B cell (primary cell): ENCODE measurements at regions of chr17 and their contacts with region 1.

Region 1: GRCh38 chr17:63600569-63601438 is at the start of gene TACO1:
- DNase-seq: peak; percentile 87
- ATAC-seq: peak; percentile 97
- H3K4me3 ChIP-seq: peak within 1 kb of the TSS; percentile 67 to 97 (median 91)
- H3K4me3 Mint-ChIP-seq: peak within 1 kb of the TSS; percentile 95
- H3K27ac ChIP-seq: peak within 1 kb of the TSS; percentile 39 to 88
- H3K27ac Mint-ChIP-seq: peak within 1 kb of the TSS; percentile 93
- H3K4me1 ChIP-seq: peaks cover 15 to 19% of the 10 kb centered on the region in 2 donors
- H3K4me1 Mint-ChIP-seq: peaks cover 21% of the 10 kb centered on the region
- H3K27me3 ChIP-seq: no peaks in the 10 kb centered on the region
- H3K27me3 Mint-ChIP-seq: no peaks in the 10 kb centered on the region
- CTCF ChIP-seq: no peak
- total RNA-seq, gene TACO1: 15.9 and 17.2 TPM in 2 replicates

Region 2: DNA sequence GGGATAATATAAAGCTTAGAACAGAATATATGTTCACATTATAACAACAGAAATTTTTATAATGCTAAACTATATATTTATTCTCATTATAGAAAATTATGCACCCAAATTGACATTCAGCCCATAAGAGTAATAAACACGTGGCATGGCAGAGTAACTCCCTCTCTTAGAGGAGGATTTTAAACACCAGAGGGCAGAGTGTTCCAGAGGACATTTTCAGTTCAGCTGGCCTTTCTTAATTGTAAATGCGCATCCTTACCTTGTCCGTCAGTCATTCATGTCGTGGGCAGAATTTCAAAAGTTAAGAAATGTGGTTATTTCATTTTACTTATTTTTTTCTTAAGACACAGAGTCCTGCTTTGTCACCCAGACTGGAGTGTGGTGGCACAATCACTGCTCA is 487.6 kb before region 1 on chr17:
- CTCF ChIA-PET with region 1: no interaction called
- POLR2A ChIA-PET with region 1: no interaction called
- intact Hi-C with region 1: no loop called
- DNase-seq: peak; percentile 38
- ATAC-seq: no peak
- H3K4me3 ChIP-seq: no peak overlapping the region
- H3K4me3 Mint-ChIP-seq: no peak overlapping the region
- H3K27ac ChIP-seq: no peak overlapping the region
- H3K27ac Mint-ChIP-seq: no peak overlapping the region
- H3K4me1 ChIP-seq: no peaks in the 10 kb centered on the region
- H3K4me1 Mint-ChIP-seq: no peaks in the 10 kb centered on the region
- H3K27me3 ChIP-seq: no peaks in the 10 kb centered on the region
- H3K27me3 Mint-ChIP-seq: peaks cover 6% of the 10 kb centered on the region
- CTCF ChIP-seq: no peak

Region 3: DNA sequence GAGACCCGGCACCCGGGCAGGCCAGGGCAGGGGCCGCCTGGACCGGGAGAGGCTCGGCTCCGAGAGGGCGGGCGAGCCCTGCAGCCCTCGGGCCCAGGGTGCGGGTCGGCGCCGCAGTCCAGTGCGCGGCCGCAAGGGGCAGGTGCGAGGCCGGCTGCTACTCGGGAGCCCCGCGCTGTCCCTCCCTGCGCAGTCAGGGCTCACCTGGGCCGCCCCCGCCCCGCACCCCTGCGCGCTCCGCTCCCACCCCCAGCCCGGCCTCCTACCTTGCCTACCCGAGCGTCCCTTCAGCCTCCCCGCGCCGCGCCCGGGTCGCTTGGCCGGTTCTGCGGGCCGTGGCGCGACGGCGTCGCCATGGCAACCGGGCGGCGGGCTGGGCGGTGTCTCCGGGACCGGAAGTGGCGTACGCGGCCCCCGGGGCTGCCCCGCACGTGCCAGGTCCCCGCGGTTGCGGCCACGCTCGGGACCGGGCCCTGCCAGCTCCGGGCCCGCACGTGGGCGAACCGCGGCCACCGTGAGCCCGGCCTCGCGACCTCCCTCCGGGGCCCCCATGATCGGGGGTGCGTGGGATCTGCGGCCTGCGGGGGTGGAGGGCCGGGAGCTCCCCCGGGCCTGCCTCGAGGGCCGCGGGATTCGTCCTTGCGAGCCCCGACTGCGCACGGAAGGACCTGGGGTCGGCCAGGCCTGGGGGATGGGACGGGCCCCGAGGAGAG is 154.7 kb before region 1 on chr17 and contains the start of gene CYB561:
- CTCF ChIA-PET with region 1: no interaction called
- POLR2A ChIA-PET with region 1: interaction called, 6 read pairs
- intact Hi-C with region 1: loop called (anchors 5 kb)
- DNase-seq: peak; percentile 94
- ATAC-seq: peak; percentile 73
- H3K4me3 ChIP-seq: peak within 1 kb of the TSS in 4 of 5 experiments; percentile 54 to 70 (median 61)
- H3K4me3 Mint-ChIP-seq: peak within 1 kb of the TSS; percentile 77
- H3K27ac ChIP-seq: peak within 1 kb of the TSS; percentile 38 to 79
- H3K27ac Mint-ChIP-seq: peak within 1 kb of the TSS; percentile 81
- H3K4me1 ChIP-seq: peaks cover 13 to 24% of the 10 kb centered on the region in 2 donors
- H3K4me1 Mint-ChIP-seq: peaks cover 15% of the 10 kb centered on the region
- H3K27me3 ChIP-seq: peaks cover 0 to 2% (median 0%) of the 10 kb centered on the region in 4 experiments
- H3K27me3 Mint-ChIP-seq: peaks cover 6% of the 10 kb centered on the region
- CTCF ChIP-seq: peak; percentile 59
- total RNA-seq, gene CYB561: 3.6 and 4.9 TPM in 2 replicates

Region 4: DNA sequence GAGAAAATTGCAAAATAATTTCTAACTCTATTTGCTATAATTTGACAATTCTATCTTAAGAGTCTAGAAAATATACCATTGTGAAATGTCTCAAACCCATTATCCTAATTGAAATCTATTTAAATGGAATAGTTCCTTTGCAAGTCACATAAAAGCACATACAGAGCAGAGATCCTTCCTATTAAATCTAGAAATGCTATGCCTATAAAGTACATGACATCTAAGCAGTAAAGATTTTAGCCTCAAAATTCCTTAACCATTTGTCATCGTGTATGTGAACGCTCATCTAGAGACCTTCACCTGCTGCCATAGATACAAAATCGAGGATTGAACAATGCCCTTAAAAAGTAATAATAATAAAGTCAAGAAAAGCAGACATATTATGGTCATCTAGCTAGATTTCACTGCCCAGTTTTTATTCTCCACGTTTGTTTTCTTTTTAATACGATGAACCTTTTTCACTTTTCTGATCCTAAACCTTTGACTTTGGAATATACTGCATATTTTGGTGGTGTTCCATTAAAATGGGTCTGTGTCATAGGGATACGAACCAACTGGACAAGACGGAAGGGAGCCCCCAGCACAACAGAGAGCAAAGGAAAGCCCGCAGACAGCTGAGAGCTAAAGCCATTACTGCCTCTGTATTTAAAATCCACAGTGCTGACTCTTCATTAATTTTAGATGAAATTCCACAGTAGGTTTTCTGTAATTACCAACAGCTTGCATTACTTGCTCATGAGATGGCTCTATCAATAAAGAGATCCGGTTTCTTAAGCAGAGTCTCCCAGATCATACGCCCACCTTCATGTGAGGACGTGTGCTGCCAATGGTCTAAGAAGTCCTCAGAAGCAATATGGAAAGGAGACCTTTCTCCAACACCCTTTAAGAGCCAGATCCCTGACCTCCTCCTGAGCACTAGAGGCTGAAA is 644.7 kb after region 1 on chr17:
- CTCF ChIA-PET with region 1: no interaction called
- POLR2A ChIA-PET with region 1: no interaction called
- intact Hi-C with region 1: no loop called
- DNase-seq: no peak
- ATAC-seq: no peak
- H3K4me3 ChIP-seq: no peak overlapping the region
- H3K4me3 Mint-ChIP-seq: no peak overlapping the region
- H3K27ac ChIP-seq: no peak overlapping the region
- H3K27ac Mint-ChIP-seq: no peak overlapping the region
- H3K4me1 ChIP-seq: no peaks in the 10 kb centered on the region
- H3K4me1 Mint-ChIP-seq: no peaks in the 10 kb centered on the region
- H3K27me3 ChIP-seq: no peaks in the 10 kb centered on the region
- H3K27me3 Mint-ChIP-seq: no peaks in the 10 kb centered on the region
- CTCF ChIP-seq: no peak